BJ (cell line): ENCODE measurements at regions of chr3 and their contacts with region 1.

Region 1: DNA sequence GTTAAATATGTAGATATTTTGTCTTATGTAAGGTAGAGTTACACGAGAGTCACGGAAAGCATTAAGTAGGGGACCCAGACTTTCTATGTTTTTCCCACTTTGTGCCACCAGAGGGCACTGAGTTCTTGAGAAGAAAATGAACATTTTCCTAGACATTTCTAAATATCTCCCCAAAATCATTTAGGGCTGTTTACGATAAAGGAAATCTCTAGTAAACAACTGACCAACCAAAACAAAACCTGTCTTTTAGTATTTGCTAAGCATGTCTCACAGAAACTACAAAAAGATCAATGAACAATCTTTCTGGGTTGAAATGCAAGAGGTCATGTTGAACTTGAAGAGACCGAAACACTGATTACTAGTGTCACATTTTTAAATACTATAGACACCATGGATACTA is 16.1 kb downstream of the POU1F1 start:
- DNase-seq: peak; percentile 3
- H3K4me3 ChIP-seq: no peak overlapping the region
- H3K27me3 ChIP-seq: no peaks in the 10 kb centered on the region
- CTCF ChIP-seq: peak; percentile 76

Region 2: DNA sequence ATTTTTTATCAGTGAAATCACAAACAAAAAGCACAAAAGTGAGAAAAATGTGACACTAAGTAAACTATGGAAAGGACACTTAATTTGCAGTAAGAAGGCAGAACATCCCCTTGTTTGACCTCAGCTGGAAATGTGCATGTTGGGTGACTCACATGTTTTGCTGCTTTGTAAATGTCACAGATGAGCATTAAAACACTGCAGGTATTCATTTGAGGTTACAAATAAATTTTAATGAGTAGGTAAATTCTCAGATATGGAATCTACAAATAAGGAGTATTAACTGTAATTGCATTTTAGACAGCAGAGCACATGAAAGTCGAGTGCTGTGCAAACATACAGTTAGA is 12.9 kb before region 1 on chr3:
- CTCF ChIA-PET with region 1: interaction called, 18 read pairs
- POLR2A ChIA-PET with region 1: no interaction called
- DNase-seq: no peak
- H3K4me3 ChIP-seq: no peak overlapping the region
- H3K27me3 ChIP-seq: no peaks in the 10 kb centered on the region
- CTCF ChIP-seq: no peak

Region 3: DNA sequence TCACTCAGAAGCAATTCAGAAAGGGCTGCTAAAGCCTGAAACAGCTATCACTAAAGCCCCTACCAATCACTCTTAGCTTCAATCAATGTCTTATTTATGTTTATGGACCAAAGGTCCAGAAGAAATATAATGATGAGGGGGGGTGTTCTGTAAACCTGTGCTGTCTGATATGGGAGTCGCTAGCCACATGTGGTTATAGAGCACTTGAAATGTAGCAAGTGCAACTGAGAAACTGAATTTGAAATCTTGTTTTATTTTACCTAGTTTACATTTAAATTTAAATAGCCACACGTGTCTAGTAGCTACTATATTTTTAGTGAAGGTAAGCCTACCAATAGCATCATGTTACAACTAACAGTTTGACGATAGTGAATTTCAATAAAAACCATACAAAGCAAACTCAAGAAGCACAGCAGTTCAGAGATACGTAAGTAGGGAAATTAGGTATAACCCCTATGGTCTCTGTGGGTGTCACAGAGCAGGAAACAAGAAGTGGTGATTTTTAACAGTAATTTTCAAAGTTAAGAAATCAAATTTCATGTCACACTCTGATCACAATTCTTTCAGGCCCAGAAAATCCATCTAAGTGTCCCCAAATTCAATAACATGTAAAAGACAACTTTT is 12.6 kb after region 1 on chr3:
- CTCF ChIA-PET with region 1: interaction called, 27 read pairs
- POLR2A ChIA-PET with region 1: no interaction called
- DNase-seq: no peak
- H3K4me3 ChIP-seq: no peak overlapping the region
- H3K27me3 ChIP-seq: no peaks in the 10 kb centered on the region
- CTCF ChIP-seq: no peak